Uterus (tissue), 4 donors: ENCODE measurements at regions of chr11 and their contacts with region 1.

Region 1: GRCh38 chr11:28296426-28296825 is 188.2 kb downstream of the METTL15 start:
- DNase-seq: no peak
- H3K4me3 ChIP-seq: no peak overlapping the region
- H3K27ac ChIP-seq: no peak overlapping the region
- H3K4me1 ChIP-seq: no peaks in the 10 kb centered on the region
- H3K27me3 ChIP-seq: no peaks in the 10 kb centered on the region
- CTCF ChIP-seq: no peak
- POLR2A ChIP-seq: no peak

Region 2: DNA sequence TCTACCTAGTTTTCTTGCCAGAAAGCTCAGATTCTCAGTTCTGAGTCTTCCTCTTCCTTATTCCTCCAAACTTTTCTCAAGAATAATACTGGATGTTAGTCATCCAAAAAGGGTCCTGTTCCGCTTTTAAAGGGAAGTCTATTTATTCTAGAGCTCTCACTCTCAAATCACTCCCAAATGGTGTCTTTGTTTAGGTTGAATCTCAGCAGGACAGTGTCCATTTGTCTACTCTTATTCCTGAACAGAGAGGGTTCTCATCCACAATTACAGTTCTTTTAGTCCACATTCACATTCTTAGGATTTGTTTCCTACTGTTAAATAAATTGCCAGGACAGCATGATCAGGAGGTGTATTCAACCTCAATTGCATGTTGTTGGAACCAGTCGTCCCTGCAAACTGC is 1785.7 kb before region 1 on chr11:
- intact Hi-C with region 1: loop called (anchors 5 kb)
- DNase-seq: no peak
- H3K4me3 ChIP-seq: no peak overlapping the region
- H3K27ac ChIP-seq: no peak overlapping the region
- H3K4me1 ChIP-seq: no peaks in the 10 kb centered on the region
- H3K27me3 ChIP-seq: no peaks in the 10 kb centered on the region
- CTCF ChIP-seq: no peak
- POLR2A ChIP-seq: no peak

Region 3: DNA sequence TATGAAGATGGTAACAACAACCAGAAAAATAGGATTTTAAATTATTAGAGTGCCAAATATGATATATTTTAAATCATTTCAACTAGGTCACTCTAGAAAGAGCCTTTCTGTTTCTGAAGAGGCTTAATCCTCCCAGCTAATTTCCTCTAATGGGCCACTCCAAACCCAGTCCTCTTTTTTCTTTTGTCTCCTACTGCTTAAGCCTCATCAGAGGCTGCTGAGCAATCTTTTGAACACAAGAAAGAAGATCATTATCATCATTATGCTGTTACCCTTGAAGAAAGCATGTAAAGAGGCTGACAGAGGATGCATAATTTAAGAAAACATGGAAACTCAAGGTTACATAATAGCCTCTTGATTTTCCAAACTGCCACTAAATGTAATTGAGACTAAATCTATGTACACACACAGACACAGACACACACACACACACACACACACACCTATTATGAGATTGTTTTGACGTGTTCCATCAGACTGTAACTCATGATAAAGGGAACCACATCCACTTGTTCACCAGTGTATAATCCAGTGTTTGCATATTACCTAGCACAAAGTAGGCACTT is 331.3 kb after region 1 on chr11:
- intact Hi-C with region 1: no loop called
- DNase-seq: no peak
- H3K4me3 ChIP-seq: no peak overlapping the region
- H3K27ac ChIP-seq: no peak overlapping the region
- H3K4me1 ChIP-seq: no peaks in the 10 kb centered on the region
- H3K27me3 ChIP-seq: no peaks in the 10 kb centered on the region
- CTCF ChIP-seq: no peak
- POLR2A ChIP-seq: no peak